OCI-LY7 (cell line): ENCODE measurements at regions of chr14 and their contacts with region 1.

Region 1: DNA sequence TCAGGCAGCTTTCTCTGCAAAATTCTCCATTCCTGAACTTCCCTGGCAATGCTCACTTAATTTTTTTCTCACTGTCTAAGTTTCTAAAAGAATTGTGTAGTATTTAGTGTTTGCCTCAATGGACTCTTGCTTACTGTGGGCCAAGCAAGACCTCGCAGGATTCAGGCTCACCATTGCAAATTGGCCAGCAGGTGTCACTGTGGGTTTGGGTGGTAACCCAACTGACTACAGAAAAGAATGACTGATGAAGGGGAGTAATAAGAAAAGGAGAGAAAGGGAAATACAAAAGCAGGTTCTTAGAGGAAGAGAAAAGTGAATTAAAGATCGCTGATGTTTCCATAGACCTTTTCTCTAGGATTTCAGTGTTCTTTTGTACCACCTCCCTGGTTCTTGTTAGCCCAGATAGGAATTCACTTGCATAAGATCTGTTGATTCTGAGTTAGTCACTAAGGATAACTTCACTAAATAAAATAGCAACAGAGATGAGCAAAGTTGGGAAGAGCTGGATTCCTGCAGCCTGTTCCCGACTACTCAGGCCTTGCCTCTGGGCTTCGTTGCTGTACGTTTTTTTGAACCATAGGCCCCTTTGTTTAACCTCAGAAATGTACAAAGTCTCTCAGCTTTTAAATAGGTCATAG is 386.5 kb upstream of the DDHD1 start:
- DNase-seq: peak; percentile 78
- H3K4me3 ChIP-seq: no peak overlapping the region
- H3K27ac ChIP-seq: no peak overlapping the region
- H3K4me1 ChIP-seq: peaks cover 15% of the 10 kb centered on the region
- CTCF ChIP-seq: peak; percentile 98

Region 2: GRCh38 chr14:53509276-53510244 is 30.0 kb before region 1 on chr14:
- CTCF ChIA-PET with region 1: no interaction called
- POLR2A ChIA-PET with region 1: no interaction called
- intact Hi-C with region 1: no loop called
- DNase-seq: no peak
- H3K4me3 ChIP-seq: no peak overlapping the region
- H3K27ac ChIP-seq: no peak overlapping the region
- H3K4me1 ChIP-seq: no peaks in the 10 kb centered on the region
- CTCF ChIP-seq: no peak

Region 3: DNA sequence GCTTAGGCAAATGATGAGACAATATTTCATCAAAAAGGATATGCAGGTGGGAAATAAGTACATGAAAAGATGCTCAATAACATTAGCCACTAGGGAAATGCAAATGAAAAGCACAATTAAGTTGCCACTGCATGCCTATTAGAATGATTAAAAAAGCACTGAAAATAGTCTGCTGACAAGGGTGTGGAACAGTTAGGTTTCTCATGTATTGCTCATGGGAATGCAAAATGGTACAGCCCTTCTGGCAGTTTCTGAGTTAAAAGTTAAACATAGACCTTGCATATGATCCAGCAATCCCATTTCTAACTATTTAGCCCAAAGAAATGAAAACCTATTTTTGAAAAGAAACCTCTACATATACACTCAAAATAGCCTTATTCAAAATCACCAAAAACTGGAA is 24.0 kb after region 1 on chr14:
- CTCF ChIA-PET with region 1: no interaction called
- POLR2A ChIA-PET with region 1: no interaction called
- intact Hi-C with region 1: no loop called
- DNase-seq: no peak
- H3K4me3 ChIP-seq: no peak overlapping the region
- H3K27ac ChIP-seq: no peak overlapping the region
- H3K4me1 ChIP-seq: no peaks in the 10 kb centered on the region
- CTCF ChIP-seq: no peak

Region 4: DNA sequence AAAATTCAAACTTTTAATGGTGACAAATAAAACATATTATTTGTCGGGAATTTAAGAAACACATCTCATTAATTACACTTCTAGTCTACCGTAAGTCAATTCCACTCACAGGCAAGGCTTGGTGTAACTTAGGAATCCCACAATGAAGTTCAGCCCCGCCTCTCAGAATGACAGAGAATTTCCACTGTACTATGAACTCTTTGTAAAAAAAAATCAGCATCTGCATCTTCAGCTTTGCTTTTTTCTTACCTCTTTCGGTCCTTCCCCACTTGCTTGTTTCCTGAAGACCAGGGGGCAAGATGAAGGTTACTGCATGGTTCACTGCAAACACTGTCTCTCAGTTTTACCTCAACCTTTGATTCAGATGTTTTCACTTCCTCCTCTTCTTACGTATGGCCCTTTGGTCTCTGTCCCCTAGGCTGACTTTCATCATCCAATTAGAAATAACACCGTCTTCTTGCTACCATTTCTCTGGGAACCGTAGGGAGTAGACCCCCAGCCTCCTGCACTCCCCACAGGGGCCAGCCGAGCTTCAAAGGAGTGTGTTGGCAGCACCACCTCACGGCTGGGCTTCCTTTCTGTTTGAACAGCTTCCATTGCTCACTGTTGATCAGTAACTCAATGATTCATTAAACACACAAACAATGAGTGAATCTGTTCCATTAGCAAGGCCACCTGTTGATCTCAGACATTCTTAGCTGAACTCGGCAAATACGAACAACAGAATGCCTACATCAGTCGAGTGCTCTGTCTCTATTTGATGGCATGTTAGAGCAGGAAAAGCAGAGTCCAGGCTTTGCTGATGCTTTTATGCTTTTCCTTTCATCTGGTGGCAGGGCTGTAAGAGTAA is 74.0 kb after region 1 on chr14:
- CTCF ChIA-PET with region 1: no interaction called
- POLR2A ChIA-PET with region 1: interaction called, 4 read pairs
- intact Hi-C with region 1: loop called (anchors 2 kb)
- DNase-seq: peak; percentile 96
- H3K4me3 ChIP-seq: peak overlapping the region; percentile 69
- H3K27ac ChIP-seq: peak overlapping the region; percentile 95
- H3K4me1 ChIP-seq: peaks cover 64% of the 10 kb centered on the region
- CTCF ChIP-seq: peak; percentile 44; the same call in 1 of the 2 replicates

Region 5: GRCh38 chr14:53929871-53930715 is 390.5 kb after region 1 on chr14:
- CTCF ChIA-PET with region 1: no interaction called
- POLR2A ChIA-PET with region 1: no interaction called
- intact Hi-C with region 1: loop called (anchors 10 kb)
- DNase-seq: peak; percentile 50
- H3K4me3 ChIP-seq: no peak overlapping the region
- H3K27ac ChIP-seq: no peak overlapping the region
- H3K4me1 ChIP-seq: no peaks in the 10 kb centered on the region
- CTCF ChIP-seq: peak; percentile 84

Region 6: DNA sequence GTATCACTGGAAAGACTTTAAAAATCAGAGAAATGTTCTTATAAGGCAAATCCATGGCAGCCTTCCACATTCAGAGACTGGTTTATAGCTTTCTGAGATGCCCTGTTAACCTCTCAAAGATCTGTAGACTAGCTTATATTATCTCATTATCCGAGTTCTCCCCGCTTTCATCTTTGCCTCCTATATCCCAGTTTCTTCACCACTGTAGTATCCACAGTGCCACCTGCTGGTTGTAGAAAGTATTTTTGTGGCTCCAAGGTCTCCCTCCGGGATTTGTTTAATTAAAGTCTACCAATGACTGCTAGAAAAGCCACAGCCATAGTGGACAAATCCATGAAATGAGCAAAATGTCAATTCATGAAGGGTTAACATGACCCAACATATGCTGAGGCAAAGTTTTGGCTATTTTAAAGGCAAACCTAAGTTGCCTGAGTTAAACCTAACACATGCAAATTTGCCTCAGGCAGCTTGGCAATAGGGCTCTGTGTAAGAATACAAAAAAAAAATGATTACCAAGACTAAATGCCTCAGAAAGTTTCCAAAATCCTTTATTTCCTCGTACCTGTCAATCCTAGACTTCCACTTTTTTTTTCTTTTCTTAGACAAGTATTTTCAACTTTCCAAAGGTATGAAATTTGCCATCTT is 635.8 kb after region 1 on chr14:
- CTCF ChIA-PET with region 1: no interaction called
- POLR2A ChIA-PET with region 1: no interaction called
- intact Hi-C with region 1: loop called (anchors 1 kb)
- DNase-seq: peak; percentile 65
- H3K4me3 ChIP-seq: no peak overlapping the region
- H3K27ac ChIP-seq: no peak overlapping the region
- H3K4me1 ChIP-seq: no peaks in the 10 kb centered on the region
- CTCF ChIP-seq: peak; percentile 95

Region 7: GRCh38 chr14:54347997-54348611 is 808.5 kb after region 1 on chr14:
- CTCF ChIA-PET with region 1: interaction called, 3 read pairs
- POLR2A ChIA-PET with region 1: no interaction called
- intact Hi-C with region 1: loop called (anchors 1 kb)
- DNase-seq: peak; percentile 71
- H3K4me3 ChIP-seq: no peak overlapping the region
- H3K27ac ChIP-seq: no peak overlapping the region
- H3K4me1 ChIP-seq: no peaks in the 10 kb centered on the region
- CTCF ChIP-seq: peak; percentile 94